Activated CD4-positive, alpha-beta T cell treated with anti-CD3 and anti-CD28 coated beads for 36 hours (primary cell): ENCODE measurements at regions of chr12 and their contacts with region 1.

Region 1: DNA sequence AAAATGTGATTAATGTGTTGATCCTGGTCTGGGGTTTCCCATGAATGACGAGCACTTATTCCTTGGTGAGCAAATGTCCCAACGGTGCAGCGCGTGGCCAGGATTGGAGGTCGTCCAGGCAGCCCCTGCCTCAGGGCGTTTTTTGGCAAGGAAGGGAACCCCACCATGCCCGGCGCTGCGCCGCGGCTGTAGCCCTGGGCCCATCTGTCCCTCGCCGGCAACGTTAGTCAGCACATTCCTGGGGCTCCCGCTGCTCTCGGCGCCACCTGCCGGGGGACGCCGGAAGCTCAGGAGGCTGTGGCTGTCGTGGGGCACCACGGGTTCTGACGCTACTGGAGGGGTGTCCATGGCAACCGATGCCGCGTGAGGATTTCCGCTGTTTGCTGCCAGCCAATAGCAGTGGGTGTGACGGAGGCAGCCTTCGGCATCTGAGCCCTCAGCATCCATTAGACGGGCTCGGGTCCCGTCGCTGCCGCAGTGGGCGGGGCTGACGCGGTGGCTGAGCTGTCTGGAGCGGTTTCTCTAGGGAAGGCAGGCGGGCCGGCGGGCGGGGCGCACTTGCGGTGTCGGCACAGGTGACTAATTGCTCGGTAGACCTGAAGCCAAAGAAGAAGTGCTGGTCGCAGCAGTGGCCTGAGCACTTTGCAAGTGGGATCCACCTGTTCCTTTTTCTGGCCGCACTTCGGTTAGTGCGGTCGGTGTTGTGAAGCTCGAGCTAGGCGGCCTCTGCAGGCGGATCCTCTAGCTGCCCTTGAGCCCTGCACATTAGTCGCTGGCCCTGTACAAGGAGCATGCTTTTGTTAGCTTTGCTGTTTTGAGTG is 29.5 kb downstream of the RAB35 start:
- DNase-seq: peak; percentile 100
- ATAC-seq: peak; percentile 98
- H3K4me3 Mint-ChIP-seq: peak overlapping the region; percentile 46
- H3K27ac Mint-ChIP-seq: peak overlapping the region; percentile 75
- H3K4me1 Mint-ChIP-seq: peaks cover 41% of the 10 kb centered on the region
- H3K27me3 Mint-ChIP-seq: no peaks in the 10 kb centered on the region

Region 2: GRCh38 chr12:119876761-119877638 is 210.0 kb before region 1 on chr12 and contains the start of gene CIT:
- CTCF ChIA-PET with region 1: no interaction called
- POLR2A ChIA-PET with region 1: no interaction called
- intact Hi-C with region 1: loop called in 1 of 2 experiments (anchors 1 kb)
- DNase-seq: peak; percentile 93
- ATAC-seq: peak; percentile 100
- H3K4me3 Mint-ChIP-seq: peak within 1 kb of the TSS; percentile 82
- H3K27ac Mint-ChIP-seq: peak within 1 kb of the TSS; percentile 63
- H3K4me1 Mint-ChIP-seq: peaks cover 13% of the 10 kb centered on the region
- H3K27me3 Mint-ChIP-seq: no peaks in the 10 kb centered on the region
- total RNA-seq, gene CIT: 54.6 to 71.5 TPM

Region 3: DNA sequence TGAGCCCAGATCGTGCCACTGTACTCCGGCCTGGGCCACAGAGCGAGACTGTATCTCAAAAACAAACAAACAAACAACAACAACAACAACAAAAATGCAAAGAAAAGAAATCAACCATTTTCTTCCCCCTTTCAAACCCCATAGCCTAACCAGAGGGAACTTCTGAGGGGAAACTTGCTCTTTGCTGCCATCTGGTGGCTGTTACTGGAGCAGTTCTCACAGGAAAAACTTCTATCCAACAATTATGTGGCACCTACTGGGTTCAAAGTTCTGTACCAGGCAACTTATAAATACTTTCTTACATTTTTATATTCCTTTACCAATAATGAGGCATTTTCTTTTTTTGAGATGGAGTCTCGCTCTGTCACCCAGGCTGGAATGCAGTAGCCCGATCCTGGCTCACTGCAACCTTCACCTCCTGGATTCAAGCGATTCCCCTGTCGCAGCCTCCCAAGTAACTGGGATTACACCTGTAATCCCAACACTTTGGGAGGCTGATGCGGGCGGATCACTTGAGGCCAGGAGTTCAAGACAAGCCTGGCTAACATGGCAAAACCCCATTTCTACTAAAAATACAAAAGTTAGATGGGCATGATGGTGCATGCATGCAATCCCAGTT is 148.9 kb before region 1 on chr12:
- CTCF ChIA-PET with region 1: no interaction called
- POLR2A ChIA-PET with region 1: no interaction called
- intact Hi-C with region 1: loop called in 1 of 2 experiments (anchors 2 kb)
- DNase-seq: peak; percentile 81
- ATAC-seq: peak; percentile 74
- H3K4me3 Mint-ChIP-seq: no peak overlapping the region
- H3K27ac Mint-ChIP-seq: no peak overlapping the region
- H3K4me1 Mint-ChIP-seq: no peaks in the 10 kb centered on the region
- H3K27me3 Mint-ChIP-seq: no peaks in the 10 kb centered on the region

Region 4: DNA sequence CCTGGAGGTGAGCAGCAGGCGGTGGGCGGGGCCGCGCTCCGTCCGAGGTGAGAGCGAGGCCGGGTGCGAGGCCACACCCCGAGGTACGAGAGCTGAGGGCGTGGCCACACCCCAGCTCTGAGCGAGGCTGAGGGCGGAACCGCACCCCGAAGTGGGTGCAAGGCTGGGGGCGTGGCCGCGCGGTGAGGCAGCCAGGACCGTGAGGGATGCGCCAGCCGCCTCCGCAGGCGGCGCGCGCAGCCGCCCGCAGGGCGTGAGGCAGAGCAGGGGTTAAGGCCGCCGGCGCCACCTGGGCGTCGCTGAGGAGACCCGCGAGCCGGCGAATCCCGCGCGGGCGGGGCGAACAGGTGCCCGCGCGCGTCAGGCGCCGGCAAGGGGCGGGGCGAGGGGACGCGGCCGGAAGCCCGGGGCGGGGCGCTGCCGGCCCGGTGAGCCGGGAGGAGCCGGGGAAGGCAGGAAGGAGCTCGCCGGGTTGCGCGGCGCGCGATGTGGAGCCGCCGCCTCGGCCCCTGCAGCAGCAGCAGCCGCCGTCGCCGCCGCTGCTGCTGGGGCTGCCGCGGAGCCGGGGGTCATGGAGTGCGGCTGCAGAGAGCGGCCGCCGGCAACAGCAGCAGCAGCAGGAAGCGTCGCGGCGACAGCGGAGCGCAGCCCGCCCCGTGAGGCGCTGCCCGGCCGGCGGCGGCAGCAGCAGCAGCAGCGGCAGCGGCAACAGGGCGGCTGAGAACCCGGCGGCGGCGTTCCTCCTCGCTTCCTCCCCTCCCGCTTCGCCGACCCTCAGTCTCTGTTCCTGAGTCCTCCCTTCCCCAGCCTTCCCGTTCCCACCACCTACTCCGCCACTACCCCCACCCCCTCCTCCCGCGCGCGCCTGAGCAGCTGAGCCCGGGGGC is 98.0 kb before region 1 on chr12 and contains the start of gene BICDL1:
- CTCF ChIA-PET with region 1: interaction called, 6 read pairs
- POLR2A ChIA-PET with region 1: interaction called, 16 read pairs
- intact Hi-C with region 1: loop called (anchors 1 kb)
- DNase-seq: peak; percentile 99
- ATAC-seq: peak; percentile 87
- H3K4me3 Mint-ChIP-seq: peak within 1 kb of the TSS; percentile 90
- H3K27ac Mint-ChIP-seq: peak within 1 kb of the TSS; percentile 92
- H3K4me1 Mint-ChIP-seq: peaks cover 46% of the 10 kb centered on the region
- H3K27me3 Mint-ChIP-seq: no peaks in the 10 kb centered on the region
- total RNA-seq, gene BICDL1: 106 to 132 TPM

Region 5: GRCh38 chr12:120116792-120117651 is 30.0 kb after region 1 on chr12:
- CTCF ChIA-PET with region 1: interaction called, 10 read pairs
- POLR2A ChIA-PET with region 1: interaction called, 6 read pairs
- intact Hi-C with region 1: loop called (anchors 1 kb)
- DNase-seq: peak; percentile 99
- ATAC-seq: peak; percentile 68
- H3K4me3 Mint-ChIP-seq: peak overlapping the region; percentile 85
- H3K27ac Mint-ChIP-seq: peak overlapping the region; percentile 87
- H3K4me1 Mint-ChIP-seq: peaks cover 77% of the 10 kb centered on the region
- H3K27me3 Mint-ChIP-seq: no peaks in the 10 kb centered on the region

Region 6: DNA sequence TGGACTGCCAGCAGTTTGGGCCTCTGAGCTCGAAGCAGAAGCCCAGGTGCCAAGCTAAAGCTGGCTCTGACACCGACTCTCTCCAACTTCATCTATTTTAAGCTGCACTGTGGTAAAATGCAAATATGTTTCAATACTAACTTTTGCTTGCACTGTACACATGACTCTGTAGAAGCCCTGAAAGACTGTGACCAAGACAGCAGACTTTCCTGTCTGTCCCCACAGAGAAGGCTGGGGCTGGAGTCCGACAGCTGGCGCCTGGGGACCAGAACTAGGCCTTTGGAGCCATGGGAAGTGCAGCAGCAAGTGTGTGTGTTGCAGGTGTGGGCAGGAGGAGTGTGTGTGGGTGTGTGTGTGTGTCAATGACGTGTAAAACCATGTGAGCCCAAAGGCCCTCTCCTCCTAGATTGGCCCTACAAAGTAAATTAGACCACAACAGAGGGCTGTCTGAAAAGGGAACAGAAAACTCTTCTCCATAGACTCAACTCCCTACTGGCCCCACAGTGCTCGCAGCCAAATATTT is 45.9 kb after region 1 on chr12:
- CTCF ChIA-PET with region 1: no interaction called
- POLR2A ChIA-PET with region 1: no interaction called
- intact Hi-C with region 1: no loop called
- DNase-seq: no peak
- ATAC-seq: no peak
- H3K4me3 Mint-ChIP-seq: no peak overlapping the region
- H3K27ac Mint-ChIP-seq: peak overlapping the region; percentile 25
- H3K4me1 Mint-ChIP-seq: peaks cover 6% of the 10 kb centered on the region
- H3K27me3 Mint-ChIP-seq: no peaks in the 10 kb centered on the region